ENCODE measurements at regions of chr12 and their contacts with region 1.

Region 1: GRCh38 chr12:38906482-38907170 is 1.2 kb upstream of the CPNE8 start:
- DNase-seq: peak; percentile 94
- H3K4me3 ChIP-seq: peak overlapping the region; percentile 58
- H3K27ac ChIP-seq: peak overlapping the region; percentile 97
- H3K4me1 ChIP-seq: no peaks in the 10 kb centered on the region
- H3K27me3 ChIP-seq: no peaks in the 10 kb centered on the region
- CTCF ChIP-seq: peak; percentile 75

Region 2: GRCh38 chr12:38324896-38325295 is 581.7 kb before region 1 on chr12:
- intact Hi-C with region 1: loop called (anchors 10 kb)
- DNase-seq: no peak
- H3K4me3 ChIP-seq: no peak overlapping the region
- H3K27ac ChIP-seq: no peak overlapping the region
- H3K4me1 ChIP-seq: no peaks in the 10 kb centered on the region
- H3K27me3 ChIP-seq: no peaks in the 10 kb centered on the region
- CTCF ChIP-seq: no peak

Region 3: GRCh38 chr12:38664661-38665269 is 241.9 kb before region 1 on chr12:
- intact Hi-C with region 1: loop called (anchors 5 kb)
- DNase-seq: peak; percentile 25
- H3K4me3 ChIP-seq: no peak overlapping the region
- H3K27ac ChIP-seq: no peak overlapping the region
- H3K4me1 ChIP-seq: no peaks in the 10 kb centered on the region
- H3K27me3 ChIP-seq: no peaks in the 10 kb centered on the region
- CTCF ChIP-seq: peak; percentile 56

Region 4: GRCh38 chr12:38850476-38850875 is 56.1 kb before region 1 on chr12:
- intact Hi-C with region 1: no loop called
- DNase-seq: no peak
- H3K4me3 ChIP-seq: no peak overlapping the region
- H3K27ac ChIP-seq: no peak overlapping the region
- H3K4me1 ChIP-seq: no peaks in the 10 kb centered on the region
- H3K27me3 ChIP-seq: no peaks in the 10 kb centered on the region
- CTCF ChIP-seq: no peak

Region 5: DNA sequence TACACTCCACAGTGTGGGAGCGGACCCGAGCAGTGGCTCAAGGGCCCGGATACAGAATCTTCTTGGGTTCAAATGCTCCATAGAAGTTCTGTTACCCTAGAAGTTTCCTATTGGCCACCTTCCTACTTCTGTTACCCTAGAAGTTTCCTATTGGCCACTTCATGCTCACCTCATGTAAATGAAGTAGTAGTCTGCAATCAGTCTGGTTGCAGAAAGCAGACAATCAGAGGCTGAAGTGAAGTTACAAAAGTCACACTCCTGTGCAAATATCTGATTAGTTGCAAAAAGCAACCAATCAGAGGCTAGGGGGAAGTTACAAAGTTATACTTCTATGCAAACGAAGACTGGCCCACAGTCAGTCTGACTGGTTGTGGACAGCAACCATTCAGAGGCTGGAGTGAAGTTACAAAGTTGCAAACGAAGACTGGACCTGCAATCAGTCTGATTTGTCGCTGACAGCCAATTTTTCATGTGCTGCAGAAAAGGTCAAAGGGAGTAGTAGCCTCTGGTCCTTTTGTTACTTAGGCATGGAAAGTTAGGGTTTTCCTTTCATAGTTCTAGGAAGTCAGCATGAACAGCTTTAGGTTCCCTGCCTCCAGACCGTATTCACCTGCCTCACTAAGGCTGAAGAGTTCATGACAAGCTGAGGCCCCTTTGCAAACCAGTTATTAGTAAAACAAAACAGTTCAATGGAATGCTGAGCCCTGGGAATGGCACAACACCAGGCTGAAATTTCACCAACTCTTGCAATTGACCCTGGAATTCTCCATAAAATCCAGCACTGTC is 76.7 kb after region 1 on chr12:
- intact Hi-C with region 1: no loop called
- DNase-seq: no peak
- H3K4me3 ChIP-seq: no peak overlapping the region
- H3K27ac ChIP-seq: no peak overlapping the region
- H3K4me1 ChIP-seq: no peaks in the 10 kb centered on the region
- H3K27me3 ChIP-seq: no peaks in the 10 kb centered on the region
- CTCF ChIP-seq: no peak

Region 6: DNA sequence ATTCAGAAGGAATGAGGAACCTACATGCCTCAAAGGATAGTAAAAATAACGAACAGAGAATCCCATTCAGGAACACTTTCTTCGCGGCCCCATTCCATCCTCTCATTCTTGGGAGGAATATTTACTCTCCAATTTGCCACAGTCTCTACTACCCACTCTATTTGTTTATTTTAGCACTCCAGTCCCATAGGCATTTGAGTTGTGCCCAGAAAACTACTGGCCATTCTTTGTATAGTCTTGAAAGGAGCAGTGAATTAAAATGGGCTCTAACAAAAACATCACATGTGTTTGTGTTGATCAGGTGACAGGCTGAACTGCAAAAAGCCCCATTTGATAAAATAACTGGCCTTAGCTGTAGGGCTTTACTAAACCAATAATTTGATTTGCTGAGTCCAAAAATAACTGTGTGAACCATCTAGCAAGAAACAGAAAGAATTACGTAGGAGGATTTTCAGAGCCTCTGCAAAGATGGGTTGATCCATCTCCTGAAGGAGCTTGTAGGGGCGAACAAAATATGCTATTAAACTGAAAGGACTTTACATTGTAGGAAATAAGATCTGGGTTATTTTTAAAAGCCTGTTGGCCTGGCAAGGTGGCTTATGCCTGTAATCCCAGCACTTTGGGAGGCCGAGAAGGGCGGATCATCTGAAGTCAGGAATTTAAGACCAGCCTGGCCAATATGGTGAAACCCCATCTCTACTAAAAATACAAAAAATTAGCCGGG is 141.1 kb after region 1 on chr12:
- intact Hi-C with region 1: no loop called
- DNase-seq: no peak
- H3K4me3 ChIP-seq: no peak overlapping the region
- H3K27ac ChIP-seq: no peak overlapping the region
- H3K4me1 ChIP-seq: no peaks in the 10 kb centered on the region
- H3K27me3 ChIP-seq: no peaks in the 10 kb centered on the region
- CTCF ChIP-seq: no peak

Measured in colonic mucosa (tissue), 4 donors.